ENCODE measurements at regions of chr19 and their contacts with region 1.

Region 1: GRCh38 chr19:55674841-55675660 is at the start of gene EPN1:
- DNase-seq: peak; percentile 96 to 99 (median 97)
- ATAC-seq: peak; percentile 91
- H3K4me3 ChIP-seq: peak within 1 kb of the TSS; percentile 80
- H3K4me3 Mint-ChIP-seq: peak within 1 kb of the TSS; percentile 93
- H3K27ac ChIP-seq: peak within 1 kb of the TSS; percentile 88 to 91
- H3K27ac Mint-ChIP-seq: peak within 1 kb of the TSS; percentile 97
- H3K4me1 ChIP-seq: peaks cover 51% of the 10 kb centered on the region
- H3K4me1 Mint-ChIP-seq: peaks cover 61% of the 10 kb centered on the region
- H3K27me3 ChIP-seq: no peaks in the 10 kb centered on the region
- H3K27me3 Mint-ChIP-seq: no peaks in the 10 kb centered on the region
- CTCF ChIP-seq: no peak
- total RNA-seq, gene EPN1: 41.1 to 45.2 TPM

Region 2: GRCh38 chr19:54448774-54449700 is 1226.0 kb before region 1 on chr19 and contains the start of gene LENG8:
- CTCF ChIA-PET with region 1: no interaction called
- POLR2A ChIA-PET with region 1: no interaction called
- intact Hi-C with region 1: loop called in 1 of 2 experiments (anchors 10 kb)
- DNase-seq: peak; percentile 94 to 100 (median 97)
- ATAC-seq: peak; percentile 89
- H3K4me3 ChIP-seq: peak within 1 kb of the TSS; percentile 66 to 67
- H3K4me3 Mint-ChIP-seq: peak within 1 kb of the TSS; percentile 99
- H3K27ac ChIP-seq: peak within 1 kb of the TSS; percentile 97 to 98
- H3K27ac Mint-ChIP-seq: peak within 1 kb of the TSS; percentile 99
- H3K4me1 ChIP-seq: peaks cover 39% of the 10 kb centered on the region
- H3K4me1 Mint-ChIP-seq: peaks cover 52% of the 10 kb centered on the region
- H3K27me3 ChIP-seq: no peaks in the 10 kb centered on the region
- H3K27me3 Mint-ChIP-seq: no peaks in the 10 kb centered on the region
- CTCF ChIP-seq: no peak
- total RNA-seq, gene LENG8: 514 to 558 TPM

Region 3: DNA sequence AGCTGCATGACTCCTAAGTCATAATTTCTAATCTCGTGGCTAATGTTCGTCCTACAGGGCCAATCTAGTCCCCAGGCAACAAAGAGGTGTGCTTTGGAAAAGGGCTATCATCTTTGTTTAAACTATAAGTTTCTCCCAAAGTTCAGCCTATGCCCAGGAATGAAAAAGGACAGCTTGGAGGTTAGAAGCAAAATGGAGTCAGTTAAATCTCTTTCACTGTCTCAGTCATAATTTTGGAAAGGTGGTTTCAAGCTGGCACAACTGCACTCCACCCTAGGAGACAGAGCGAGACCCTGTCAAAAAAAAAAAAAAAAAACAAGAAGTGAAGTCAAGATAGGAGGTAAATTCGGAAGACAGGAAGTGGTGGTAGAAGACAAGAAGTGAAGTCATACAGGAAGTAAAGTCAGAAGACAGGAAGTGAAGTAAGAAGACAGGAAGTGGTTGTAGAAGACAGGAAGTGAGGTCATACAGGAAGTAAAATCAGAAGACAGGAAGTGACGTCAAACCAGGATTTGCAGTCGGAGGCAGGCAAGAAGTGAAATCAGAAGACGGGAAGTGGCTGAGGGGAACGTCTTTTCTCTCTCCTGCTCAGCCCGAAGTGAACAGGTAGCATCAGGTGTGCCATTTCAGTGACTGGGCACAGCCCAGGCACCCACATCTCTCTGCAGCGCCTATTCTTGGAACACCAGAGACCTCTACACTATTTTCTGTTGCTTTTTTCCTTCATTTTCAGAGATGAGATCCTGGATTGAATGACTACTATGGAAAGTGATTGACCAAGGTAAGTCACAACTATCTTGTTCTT is 669.2 kb before region 1 on chr19:
- CTCF ChIA-PET with region 1: no interaction called
- POLR2A ChIA-PET with region 1: no interaction called
- intact Hi-C with region 1: loop called in 1 of 2 experiments (anchors 10 kb)
- DNase-seq: peak; percentile 4 to 95 (median 54)
- ATAC-seq: peak; percentile 90
- H3K4me3 ChIP-seq: peak overlapping the region; percentile 52 to 53
- H3K4me3 Mint-ChIP-seq: peak overlapping the region; percentile 71
- H3K27ac ChIP-seq: peak overlapping the region; percentile 66 to 90
- H3K27ac Mint-ChIP-seq: peak overlapping the region; percentile 87
- H3K4me1 ChIP-seq: peaks cover 17% of the 10 kb centered on the region
- H3K4me1 Mint-ChIP-seq: peaks cover 24% of the 10 kb centered on the region
- H3K27me3 ChIP-seq: peaks cover 0 to 2% of the 10 kb centered on the region in 2 experiments
- H3K27me3 Mint-ChIP-seq: peaks cover 25% of the 10 kb centered on the region
- CTCF ChIP-seq: no peak

Region 4: DNA sequence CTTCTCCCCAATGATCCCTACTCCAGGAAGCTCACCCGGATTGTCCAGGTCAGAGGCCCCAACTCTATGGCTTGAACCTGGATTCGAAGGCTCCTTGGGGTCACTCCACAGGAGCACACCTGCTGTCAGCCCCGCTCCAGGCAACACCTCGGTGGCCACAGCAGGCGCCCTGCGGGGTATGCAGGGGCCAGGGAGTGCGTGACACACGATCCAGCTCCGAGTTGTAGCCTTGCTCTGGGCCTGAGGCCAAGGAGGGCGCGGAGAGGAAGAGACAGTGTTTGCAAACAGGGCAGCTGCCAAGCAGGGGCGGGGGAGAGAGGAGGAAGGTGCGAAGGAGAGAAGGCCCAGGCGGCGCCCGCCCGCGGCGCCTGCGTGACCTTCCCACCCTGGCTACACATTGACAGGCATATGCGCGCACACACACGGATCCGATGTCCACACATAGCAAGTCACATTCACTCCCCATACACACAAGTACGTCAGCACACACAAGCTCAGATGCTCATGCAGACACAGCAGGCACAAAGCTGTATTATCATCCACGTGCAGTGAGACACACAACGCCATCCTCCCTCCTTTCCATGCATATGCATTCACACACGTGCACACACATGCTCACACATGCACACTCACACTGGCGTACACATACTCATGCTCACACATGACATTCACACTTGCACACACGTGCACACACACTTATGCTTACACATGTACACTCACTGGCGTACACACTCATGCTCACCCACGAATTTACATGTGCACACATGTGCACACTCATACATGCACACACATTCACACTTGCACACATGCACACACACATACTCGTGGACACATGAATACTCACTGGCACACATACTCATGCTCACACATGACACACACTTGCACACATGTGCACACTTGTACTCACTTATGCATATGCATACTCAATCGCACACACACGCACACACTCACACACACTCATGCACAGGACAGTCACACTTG is 148.5 kb before region 1 on chr19:
- CTCF ChIA-PET with region 1: no interaction called
- POLR2A ChIA-PET with region 1: no interaction called
- intact Hi-C with region 1: no loop called
- DNase-seq: peak in 2 of 9 experiments; percentile 13 to 58
- ATAC-seq: no peak
- H3K4me3 ChIP-seq: no peak overlapping the region
- H3K4me3 Mint-ChIP-seq: no peak overlapping the region
- H3K27ac ChIP-seq: no peak overlapping the region
- H3K27ac Mint-ChIP-seq: no peak overlapping the region
- H3K4me1 ChIP-seq: no peaks in the 10 kb centered on the region
- H3K4me1 Mint-ChIP-seq: no peaks in the 10 kb centered on the region
- H3K27me3 ChIP-seq: no peaks in the 10 kb centered on the region
- H3K27me3 Mint-ChIP-seq: peaks cover 11% of the 10 kb centered on the region
- CTCF ChIP-seq: no peak

Region 5: GRCh38 chr19:55580628-55581144 is 94.4 kb before region 1 on chr19 and contains the start of gene ZNF579:
- CTCF ChIA-PET with region 1: no interaction called
- POLR2A ChIA-PET with region 1: no interaction called
- intact Hi-C with region 1: loop called in 1 of 2 experiments (anchors 1 kb)
- DNase-seq: peak; percentile 39 to 86 (median 75)
- ATAC-seq: peak; percentile 71
- H3K4me3 ChIP-seq: peak within 1 kb of the TSS; percentile 70 to 90
- H3K4me3 Mint-ChIP-seq: peak within 1 kb of the TSS; percentile 91
- H3K27ac ChIP-seq: peak within 1 kb of the TSS; percentile 67 to 81
- H3K27ac Mint-ChIP-seq: peak within 1 kb of the TSS; percentile 93
- H3K4me1 ChIP-seq: peaks cover 20% of the 10 kb centered on the region
- H3K4me1 Mint-ChIP-seq: peaks cover 27% of the 10 kb centered on the region
- H3K27me3 ChIP-seq: no peaks in the 10 kb centered on the region
- H3K27me3 Mint-ChIP-seq: no peaks in the 10 kb centered on the region
- CTCF ChIP-seq: no peak
- total RNA-seq, gene ZNF579: 5.7 to 6.1 TPM

Region 6: GRCh38 chr19:55643348-55644176 is 31.5 kb before region 1 on chr19 and contains the start of gene ZNF581:
- CTCF ChIA-PET with region 1: interaction called, 8 read pairs
- POLR2A ChIA-PET with region 1: interaction called, 4 read pairs
- intact Hi-C with region 1: loop called (anchors 1 kb)
- DNase-seq: peak; percentile 53 to 91 (median 77)
- ATAC-seq: peak; percentile 55
- H3K4me3 ChIP-seq: peak within 1 kb of the TSS; percentile 66 to 73
- H3K4me3 Mint-ChIP-seq: peak within 1 kb of the TSS; percentile 95
- H3K27ac ChIP-seq: peak within 1 kb of the TSS; percentile 65 to 79
- H3K27ac Mint-ChIP-seq: peak within 1 kb of the TSS; percentile 97
- H3K4me1 ChIP-seq: peaks cover 42% of the 10 kb centered on the region
- H3K4me1 Mint-ChIP-seq: peaks cover 55% of the 10 kb centered on the region
- H3K27me3 ChIP-seq: no peaks in the 10 kb centered on the region
- H3K27me3 Mint-ChIP-seq: no peaks in the 10 kb centered on the region
- CTCF ChIP-seq: no peak
- total RNA-seq, gene ZNF581: 25.6 to 25.7 TPM

Region 7: DNA sequence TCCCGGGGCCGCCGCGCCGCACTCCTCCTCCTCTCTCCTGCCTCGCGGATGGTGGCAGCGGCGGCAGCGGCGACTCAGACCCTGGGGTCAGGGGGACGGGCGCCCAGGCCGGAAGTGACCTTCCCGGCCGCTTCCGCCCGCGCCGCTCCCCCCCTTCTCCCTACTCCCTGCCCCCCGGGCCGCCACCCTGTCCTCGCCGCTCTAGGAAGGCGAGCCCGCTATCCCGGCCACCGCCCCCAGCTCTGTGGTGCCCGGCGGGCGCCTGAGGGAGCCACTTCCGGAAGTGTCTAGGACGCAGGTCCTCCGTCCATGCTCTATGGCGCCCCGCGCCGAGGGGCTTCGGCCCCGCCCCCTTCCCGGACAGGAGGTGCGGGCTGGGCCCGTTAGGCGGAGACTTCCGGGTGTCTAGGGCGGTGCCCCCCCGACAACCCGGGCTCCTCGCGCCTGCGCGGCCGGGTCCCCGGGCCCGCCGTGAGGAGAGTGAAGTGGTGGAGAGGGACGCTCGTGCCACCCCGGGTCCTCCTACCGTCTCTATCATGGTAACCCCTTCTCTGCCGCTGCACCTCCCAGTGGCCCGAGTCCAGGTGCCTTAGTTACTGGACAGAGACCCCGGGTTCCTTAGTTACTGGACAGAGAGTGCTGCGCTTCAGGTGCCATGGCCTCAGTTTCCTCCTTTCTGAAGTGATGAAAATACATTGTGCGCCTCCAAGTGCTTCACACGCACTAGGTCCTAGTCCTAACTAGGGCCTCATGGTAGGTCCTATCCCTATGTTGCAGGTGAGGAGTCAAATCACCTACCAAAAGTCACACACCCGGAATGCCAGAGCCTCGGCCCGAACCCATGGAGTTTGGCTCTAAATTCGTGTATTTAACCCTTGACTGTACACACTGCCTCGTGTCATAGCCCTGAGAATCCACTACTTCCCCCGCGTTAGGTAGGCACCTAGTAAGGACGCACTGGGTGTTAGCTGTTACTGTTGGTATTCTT is 446.4 kb after region 1 on chr19 and contains the start of gene ZNF787:
- CTCF ChIA-PET with region 1: no interaction called
- POLR2A ChIA-PET with region 1: no interaction called
- intact Hi-C with region 1: loop called in 1 of 2 experiments (anchors 5 kb)
- DNase-seq: peak; percentile 94 to 99 (median 97)
- ATAC-seq: peak; percentile 82
- H3K4me3 ChIP-seq: peak within 1 kb of the TSS; percentile 56 to 67
- H3K4me3 Mint-ChIP-seq: peak within 1 kb of the TSS; percentile 88
- H3K27ac ChIP-seq: peak within 1 kb of the TSS; percentile 81 to 97
- H3K27ac Mint-ChIP-seq: peak within 1 kb of the TSS; percentile 94
- H3K4me1 ChIP-seq: peaks cover 24% of the 10 kb centered on the region
- H3K4me1 Mint-ChIP-seq: peaks cover 43% of the 10 kb centered on the region
- H3K27me3 ChIP-seq: no peaks in the 10 kb centered on the region
- H3K27me3 Mint-ChIP-seq: no peaks in the 10 kb centered on the region
- CTCF ChIP-seq: no peak
- total RNA-seq, gene ZNF787: 10.2 to 10.8 TPM